Activated CD4-positive, alpha-beta T cell treated with anti-CD3 and anti-CD28 coated beads, Interleukin-2, amount 10 ng/mL, durations not matched to agents 24 days and 14 days (primary cell): ENCODE measurements at regions of chr12 and their contacts with region 1.

Region 1: DNA sequence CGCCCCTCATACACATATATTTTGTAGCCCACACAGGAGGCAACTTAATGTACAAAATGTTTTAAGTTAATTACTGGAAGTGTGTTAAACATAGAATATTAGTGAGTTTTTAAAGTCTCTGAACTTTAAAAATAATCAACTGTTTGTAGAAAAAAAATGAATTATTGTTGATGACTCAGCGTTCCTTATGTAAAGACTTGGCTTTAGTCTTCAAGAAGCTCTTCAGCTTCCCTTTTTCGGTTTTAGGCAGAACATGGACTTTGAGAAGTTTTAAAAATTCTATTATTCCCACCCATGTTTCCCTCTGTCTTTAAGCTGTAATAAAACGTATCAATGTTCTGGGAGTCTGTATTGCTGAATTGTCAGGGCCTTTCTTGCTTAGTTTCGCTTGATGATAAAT is 269.5 kb downstream of the FBXL14 start:
- DNase-seq: no peak
- H3K4me3 Mint-ChIP-seq: no peak overlapping the region
- H3K27ac Mint-ChIP-seq: no peak overlapping the region
- H3K4me1 Mint-ChIP-seq: peaks cover 9% of the 10 kb centered on the region
- H3K27me3 Mint-ChIP-seq: no peaks in the 10 kb centered on the region

Region 2: GRCh38 chr12:1226951-1227350 is 98.0 kb before region 1 on chr12:
- intact Hi-C with region 1: loop called (anchors 2 kb)
- DNase-seq: no peak
- H3K4me3 Mint-ChIP-seq: no peak overlapping the region
- H3K27ac Mint-ChIP-seq: no peak overlapping the region
- H3K4me1 Mint-ChIP-seq: peaks cover 6% of the 10 kb centered on the region
- H3K27me3 Mint-ChIP-seq: no peaks in the 10 kb centered on the region

Region 3: DNA sequence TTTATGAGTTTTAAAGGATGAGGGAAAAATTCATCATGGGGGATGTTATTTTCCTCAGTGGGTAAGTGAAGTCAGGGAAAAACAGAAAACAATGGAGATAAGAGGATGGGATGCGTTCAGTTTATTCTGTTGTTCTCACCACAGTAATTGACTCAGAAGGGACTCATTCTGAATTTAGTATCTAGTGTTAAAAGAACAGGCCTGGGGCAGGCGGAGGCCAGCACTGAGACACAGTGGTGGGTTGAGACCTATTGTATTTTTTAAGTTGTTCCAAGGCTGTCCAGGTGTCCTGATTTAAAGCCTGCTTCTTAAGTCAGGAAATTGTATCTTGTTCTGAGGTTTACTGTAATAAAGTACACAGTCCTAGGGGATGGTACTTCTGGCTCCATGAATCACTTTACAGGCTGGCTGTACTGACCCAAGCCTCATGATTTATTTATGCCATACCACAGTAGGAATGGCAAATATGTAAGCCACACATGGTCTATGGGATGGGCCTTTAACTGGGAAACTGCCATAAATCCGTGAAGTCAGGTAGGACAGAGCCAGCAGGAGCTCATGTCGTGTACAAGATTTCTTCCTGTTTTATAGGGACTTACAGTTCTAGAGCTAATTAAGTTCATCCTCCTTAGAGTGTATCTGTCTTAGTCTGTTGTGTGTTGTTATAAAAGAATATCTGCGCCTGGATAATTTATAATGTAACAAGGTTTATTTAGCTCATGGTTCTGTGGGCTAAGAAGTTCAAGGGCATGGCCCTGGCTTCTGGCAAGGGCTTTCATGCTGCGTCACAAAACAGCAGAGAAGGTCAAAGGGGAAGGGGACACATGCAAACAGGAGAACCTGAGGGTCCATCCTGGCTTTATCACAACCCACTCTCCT is 25.4 kb after region 1 on chr12:
- intact Hi-C with region 1: no loop called
- DNase-seq: no peak
- H3K4me3 Mint-ChIP-seq: no peak overlapping the region
- H3K27ac Mint-ChIP-seq: no peak overlapping the region
- H3K4me1 Mint-ChIP-seq: no peaks in the 10 kb centered on the region
- H3K27me3 Mint-ChIP-seq: no peaks in the 10 kb centered on the region